Left colon (tissue), 2 donors: ENCODE measurements at regions of chr15 and their contacts with region 1.

Region 1: GRCh38 chr15:45200001-45200798 is 12.4 kb upstream of the SHF start:
- DNase-seq: peak; percentile 96
- ATAC-seq: peak; percentile 69

Region 2: GRCh38 chr15:45162771-45163526 is 37.3 kb before region 1 on chr15:
- intact Hi-C with region 1: loop called in 1 of 2 experiments (anchors 5 kb)
- DNase-seq: peak; percentile 71 to 84
- ATAC-seq: peak; percentile 61

Region 3: GRCh38 chr15:45346381-45346780 is 146.2 kb after region 1 on chr15:
- intact Hi-C with region 1: no loop called
- DNase-seq: no peak
- ATAC-seq: no peak

Region 4: DNA sequence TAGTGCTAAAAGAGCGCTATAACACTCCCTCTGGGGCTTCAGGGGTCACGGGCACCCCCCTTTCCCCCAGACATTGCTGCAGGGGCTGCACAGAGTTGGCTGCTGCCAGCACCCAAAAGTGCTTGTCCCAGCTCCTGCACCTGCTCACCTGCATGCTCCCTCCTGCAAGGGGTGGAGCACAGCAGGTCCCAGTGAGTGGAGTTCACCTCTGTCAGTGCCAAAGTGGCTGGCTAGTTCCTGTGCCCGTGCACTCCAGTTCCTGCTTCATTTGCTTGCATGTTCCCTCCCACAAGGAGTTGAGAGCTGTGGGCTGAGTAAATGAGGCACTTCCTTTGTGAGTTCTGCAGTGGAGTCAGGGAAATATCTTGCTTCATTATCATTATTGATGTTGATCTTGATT is 911.5 kb after region 1 on chr15:
- intact Hi-C with region 1: no loop called
- DNase-seq: no peak
- ATAC-seq: no peak